ENCODE measurements at regions of chr2 and their contacts with region 1.

Region 1: DNA sequence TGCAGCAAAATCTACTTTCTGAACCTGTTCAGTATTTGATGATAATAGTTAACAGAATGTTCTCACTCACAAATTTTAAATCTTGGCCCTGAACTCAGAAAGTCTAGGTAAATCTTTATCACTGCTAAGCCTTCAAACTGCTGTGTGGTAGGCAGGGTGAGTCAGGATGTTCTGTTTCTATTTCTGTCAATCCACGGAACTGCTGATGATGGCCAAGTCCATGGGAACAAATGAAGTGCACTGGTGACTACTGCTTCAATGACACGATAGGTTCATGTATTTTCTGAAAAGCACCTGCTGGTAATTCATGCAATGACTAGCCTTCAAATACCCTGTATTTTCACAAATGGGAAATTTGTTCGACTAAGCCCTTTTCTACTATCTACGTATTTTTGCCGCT is 14.2 kb downstream of the NIFK start:
- DNase-seq: no peak
- H3K4me3 ChIP-seq: no peak overlapping the region
- H3K4me3 Mint-ChIP-seq: no peak overlapping the region
- H3K27ac ChIP-seq: no peak overlapping the region
- H3K27ac Mint-ChIP-seq: no peak overlapping the region
- H3K4me1 ChIP-seq: peaks cover 3% of the 10 kb centered on the region
- H3K4me1 Mint-ChIP-seq: peaks cover 3 to 6% (median 5%) of the 10 kb centered on the region in 3 donors
- H3K27me3 ChIP-seq: no peaks in the 10 kb centered on the region
- H3K27me3 Mint-ChIP-seq: no peaks in the 10 kb centered on the region

Region 2: GRCh38 chr2:121400201-121400600 is 322.3 kb before region 1 on chr2:
- CTCF ChIA-PET with region 1: interaction called, 12 read pairs
- POLR2A ChIA-PET with region 1: no interaction called
- DNase-seq: no peak
- H3K4me3 ChIP-seq: no peak overlapping the region
- H3K4me3 Mint-ChIP-seq: no peak overlapping the region
- H3K27ac ChIP-seq: no peak overlapping the region
- H3K27ac Mint-ChIP-seq: peak overlapping the region in 1 of 8 donors; percentile 79
- H3K4me1 ChIP-seq: no peaks in the 10 kb centered on the region
- H3K4me1 Mint-ChIP-seq: peaks cover 0 to 3% (median 0%) of the 10 kb centered on the region in 3 donors
- H3K27me3 ChIP-seq: no peaks in the 10 kb centered on the region
- H3K27me3 Mint-ChIP-seq: no peaks in the 10 kb centered on the region

Region 3: DNA sequence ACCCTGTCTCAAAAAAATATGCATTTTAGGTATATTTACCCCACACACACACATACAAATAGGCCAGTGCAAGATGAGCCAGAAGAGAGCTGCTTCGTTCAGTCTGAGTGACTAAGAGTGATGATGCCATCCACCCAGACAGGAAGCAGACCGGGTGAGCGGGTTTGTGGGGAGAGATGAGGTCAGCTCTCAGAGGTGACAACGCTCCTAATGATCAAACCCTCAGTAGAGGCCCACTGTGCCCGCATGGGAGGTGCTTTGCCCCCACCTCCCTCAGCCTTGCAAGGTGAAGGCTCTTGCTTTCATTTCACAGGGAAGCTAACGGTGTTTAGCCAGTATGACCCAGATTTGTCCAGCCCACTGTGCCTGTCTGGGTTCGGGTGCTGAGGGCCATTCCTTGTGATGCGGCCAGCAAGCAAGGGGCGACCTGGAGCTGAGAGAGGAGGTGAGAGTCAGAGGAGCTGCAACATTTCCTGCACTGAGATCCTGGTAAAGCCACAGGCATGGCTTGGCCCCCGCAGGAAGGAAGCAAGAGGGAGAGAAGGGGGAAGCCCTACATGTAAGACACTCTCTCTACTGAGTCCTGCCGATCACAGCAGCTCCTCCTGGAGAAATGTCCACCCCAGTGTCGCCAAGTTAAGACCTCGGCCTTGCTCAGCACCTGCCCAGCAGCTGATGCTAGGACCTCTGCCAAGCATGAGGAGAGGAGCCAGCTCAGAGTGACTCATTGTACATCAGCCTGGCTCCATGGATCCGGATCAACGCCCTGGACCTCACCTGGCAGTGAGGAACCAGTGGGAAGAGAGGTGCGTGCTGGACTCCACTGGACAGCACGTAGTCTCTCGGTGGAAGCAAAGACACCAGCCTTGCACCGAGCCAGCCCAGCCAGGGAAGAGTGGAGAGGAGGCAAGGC is 22.8 kb before region 1 on chr2:
- CTCF ChIA-PET with region 1: interaction called, 18 read pairs
- POLR2A ChIA-PET with region 1: no interaction called
- DNase-seq: peak; percentile 74 to 96 (median 85)
- H3K4me3 ChIP-seq: peak overlapping the region; percentile 58
- H3K4me3 Mint-ChIP-seq: peak overlapping the region; percentile 73 to 91 (median 87)
- H3K27ac ChIP-seq: peak overlapping the region; percentile 85
- H3K27ac Mint-ChIP-seq: peak overlapping the region; percentile 97 to 100 (median 99)
- H3K4me1 ChIP-seq: peaks cover 31% of the 10 kb centered on the region
- H3K4me1 Mint-ChIP-seq: peaks cover 41 to 49% (median 49%) of the 10 kb centered on the region in 3 donors
- H3K27me3 ChIP-seq: no peaks in the 10 kb centered on the region
- H3K27me3 Mint-ChIP-seq: no peaks in the 10 kb centered on the region